ENCODE measurements at regions of chr16 and their contacts with region 1.

Region 1: GRCh38 chr16:51971184-51971583 is 575.8 kb downstream of the TOX3 start:
- ATAC-seq: peak; percentile 43 to 82 (median 58)
- H3K4me3 ChIP-seq: no peak overlapping the region
- H3K27ac ChIP-seq: no peak overlapping the region
- H3K4me1 ChIP-seq: peaks cover 7 to 11% of the 10 kb centered on the region in 2 donors

Region 2: GRCh38 chr16:51797669-51798259 is 173.4 kb before region 1 on chr16:
- in situ Hi-C with region 1: loop called in 1 of 9 experiments (anchors 25 kb)
- ATAC-seq: peak in 5 of 8 experiments; percentile 65 to 88 (median 75)
- H3K4me3 ChIP-seq: no peak overlapping the region
- H3K27ac ChIP-seq: peak overlapping the region in 1 of 2 donors; percentile 20
- H3K4me1 ChIP-seq: peaks cover 21 to 34% of the 10 kb centered on the region in 2 donors

Region 3: GRCh38 chr16:51818342-51818944 is 152.7 kb before region 1 on chr16:
- in situ Hi-C with region 1: loop called in 1 of 9 experiments (anchors 10 kb)
- ATAC-seq: peak in 3 of 8 experiments; percentile 47 to 78 (median 68)
- H3K4me3 ChIP-seq: no peak overlapping the region
- H3K27ac ChIP-seq: no peak overlapping the region
- H3K4me1 ChIP-seq: peaks cover 2 to 37% of the 10 kb centered on the region in 2 donors